ENCODE measurements at regions of chr2 and their contacts with region 1.

Region 1: DNA sequence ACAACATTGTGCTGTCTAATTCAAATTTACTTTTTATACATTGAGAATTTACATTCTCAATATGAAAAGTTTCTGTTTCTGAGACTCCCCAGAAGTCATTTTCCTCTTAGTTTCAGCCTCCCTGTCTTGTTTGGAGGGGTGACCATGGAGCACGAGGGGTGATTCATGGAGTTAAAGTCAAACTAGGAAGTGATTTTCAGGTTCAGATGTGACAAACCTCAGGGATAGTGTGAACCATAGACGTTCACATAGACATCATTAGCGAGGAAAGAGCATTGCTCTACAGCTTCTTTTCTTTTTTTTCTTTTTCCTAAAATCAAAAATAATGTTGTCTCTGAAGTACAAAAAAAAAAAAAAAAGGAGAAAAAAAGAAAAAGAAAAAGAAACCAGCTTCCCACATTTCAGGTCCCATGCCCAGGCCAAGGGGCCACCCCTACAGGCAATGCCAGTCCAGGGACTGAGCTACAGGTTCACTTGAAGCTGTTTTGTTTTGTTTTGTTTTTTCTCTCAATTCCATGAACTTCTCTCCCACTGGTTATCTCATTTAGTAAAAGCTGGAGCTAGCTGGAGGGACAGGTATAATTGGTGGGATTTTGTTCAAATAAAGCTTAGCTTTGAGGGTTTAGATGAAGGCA is 18.1 kb upstream of the LCLAT1 start:
- DNase-seq: no peak
- H3K4me3 ChIP-seq: no peak overlapping the region
- H3K27ac ChIP-seq: no peak overlapping the region
- H3K4me1 ChIP-seq: no peaks in the 10 kb centered on the region
- H3K27me3 ChIP-seq: no peaks in the 10 kb centered on the region
- CTCF ChIP-seq: no peak

Region 2: GRCh38 chr2:29502460-29502911 is 926.5 kb before region 1 on chr2:
- CTCF ChIA-PET with region 1: no interaction called
- POLR2A ChIA-PET with region 1: interaction called, 10 read pairs
- intact Hi-C with region 1: no loop called
- DNase-seq: peak; percentile 60
- H3K4me3 ChIP-seq: no peak overlapping the region
- H3K27ac ChIP-seq: no peak overlapping the region
- H3K4me1 ChIP-seq: peaks cover 11% of the 10 kb centered on the region
- H3K27me3 ChIP-seq: no peaks in the 10 kb centered on the region
- CTCF ChIP-seq: no peak

Region 3: DNA sequence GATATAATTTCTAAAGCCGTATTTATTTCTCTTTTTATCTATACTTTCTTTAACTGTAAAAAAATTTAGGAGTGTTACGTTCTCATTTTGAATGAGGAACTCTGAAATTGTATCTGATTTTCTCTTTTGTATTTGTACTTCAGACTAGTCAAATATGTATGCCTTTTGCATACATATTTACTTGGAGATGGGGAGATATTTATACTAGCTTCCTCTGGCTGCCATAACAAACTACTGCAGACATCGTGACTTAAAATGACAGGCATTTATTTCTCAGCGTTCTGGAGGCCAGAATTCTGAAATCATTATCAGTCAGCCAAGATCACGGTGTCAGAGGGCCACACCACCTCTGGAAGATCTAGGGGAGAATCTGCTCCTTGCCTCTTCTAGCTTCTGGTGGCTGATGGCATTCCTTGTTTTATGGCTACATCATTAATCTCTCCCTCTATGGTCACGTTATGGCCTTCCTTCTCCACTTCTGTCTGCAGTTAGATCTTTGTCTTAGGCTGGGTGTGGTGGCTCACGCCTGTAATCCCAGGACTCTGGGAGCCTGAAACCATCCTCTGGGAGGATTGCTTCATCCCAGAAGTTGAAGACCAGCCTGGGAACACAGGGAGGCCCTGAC is 26.3 kb after region 1 on chr2:
- CTCF ChIA-PET with region 1: no interaction called
- POLR2A ChIA-PET with region 1: interaction called, 13 read pairs
- intact Hi-C with region 1: no loop called
- DNase-seq: no peak
- H3K4me3 ChIP-seq: no peak overlapping the region
- H3K27ac ChIP-seq: no peak overlapping the region
- H3K4me1 ChIP-seq: peaks cover 16% of the 10 kb centered on the region
- H3K27me3 ChIP-seq: no peaks in the 10 kb centered on the region
- CTCF ChIP-seq: no peak